BJ (cell line): ENCODE measurements at regions of chr6 and their contacts with region 1.

Region 1: DNA sequence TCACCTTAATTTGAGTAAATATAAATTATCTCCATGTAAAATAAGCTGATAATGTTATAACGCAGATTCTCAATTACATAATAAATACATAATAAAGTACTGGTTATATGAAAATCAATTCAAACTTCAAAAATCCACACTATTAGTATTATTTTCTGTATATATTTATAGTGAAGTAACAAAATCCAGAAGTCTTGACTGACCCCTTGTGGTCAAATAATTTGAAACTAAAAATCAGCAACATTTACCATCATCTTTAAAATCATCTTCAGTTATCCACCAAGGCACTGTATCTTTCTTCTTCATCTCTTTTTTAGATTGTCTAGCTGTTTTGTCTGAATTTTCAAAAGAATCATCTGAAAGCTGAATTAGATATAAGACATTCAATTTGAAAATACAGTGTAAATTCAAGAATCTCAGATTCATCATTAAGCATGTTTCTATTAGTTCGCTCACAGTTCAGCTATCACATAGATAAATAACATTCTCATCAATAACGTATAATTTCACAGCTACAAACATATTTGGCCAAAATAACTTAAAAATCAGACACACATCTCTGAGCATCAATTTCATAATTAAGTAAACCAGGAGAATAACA is 6.5 kb downstream of the CEP162 start:
- DNase-seq: no peak
- H3K4me3 ChIP-seq: no peak overlapping the region
- H3K27me3 ChIP-seq: no peaks in the 10 kb centered on the region
- CTCF ChIP-seq: peak; percentile 44

Region 2: GRCh38 chr6:83615025-83615999 is 605.6 kb before region 1 on chr6:
- CTCF ChIA-PET with region 1: interaction called, 13 read pairs
- POLR2A ChIA-PET with region 1: no interaction called
- DNase-seq: no peak
- H3K4me3 ChIP-seq: no peak overlapping the region
- H3K27me3 ChIP-seq: no peaks in the 10 kb centered on the region
- CTCF ChIP-seq: peak; percentile 72

Region 3: DNA sequence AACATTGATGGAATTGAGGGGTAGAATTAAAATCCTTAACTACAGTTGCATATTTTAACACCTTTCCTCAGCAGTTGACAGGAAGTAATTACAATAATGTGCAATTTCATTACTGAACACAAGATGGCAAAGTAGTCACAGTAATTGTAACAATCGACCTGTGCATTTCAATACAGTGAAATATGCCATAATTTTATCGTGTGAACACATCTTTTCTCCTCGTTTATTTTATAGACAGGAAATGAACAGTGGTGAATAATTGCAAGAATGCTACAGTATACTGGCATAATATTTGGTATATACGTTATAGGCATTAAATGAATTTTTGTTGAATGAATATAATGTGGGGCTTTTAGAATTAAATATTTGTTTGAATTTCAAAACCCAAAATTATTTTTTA is 336.4 kb before region 1 on chr6:
- CTCF ChIA-PET with region 1: interaction called, 20 read pairs
- POLR2A ChIA-PET with region 1: no interaction called
- DNase-seq: no peak
- H3K4me3 ChIP-seq: no peak overlapping the region
- H3K27me3 ChIP-seq: no peaks in the 10 kb centered on the region
- CTCF ChIP-seq: peak; percentile 54

Region 4: GRCh38 chr6:84243240-84243639 is 22.3 kb after region 1 on chr6:
- CTCF ChIA-PET with region 1: no interaction called
- POLR2A ChIA-PET with region 1: no interaction called
- DNase-seq: no peak
- H3K4me3 ChIP-seq: no peak overlapping the region
- H3K27me3 ChIP-seq: peaks cover 2% of the 10 kb centered on the region; the same call in 1 of the 2 replicates
- CTCF ChIP-seq: 0 out of 2 replicates have a peak, but pooled peaks have one; percentile 9